ENCODE measurements at regions of chr9 and their contacts with region 1.

Region 1: DNA sequence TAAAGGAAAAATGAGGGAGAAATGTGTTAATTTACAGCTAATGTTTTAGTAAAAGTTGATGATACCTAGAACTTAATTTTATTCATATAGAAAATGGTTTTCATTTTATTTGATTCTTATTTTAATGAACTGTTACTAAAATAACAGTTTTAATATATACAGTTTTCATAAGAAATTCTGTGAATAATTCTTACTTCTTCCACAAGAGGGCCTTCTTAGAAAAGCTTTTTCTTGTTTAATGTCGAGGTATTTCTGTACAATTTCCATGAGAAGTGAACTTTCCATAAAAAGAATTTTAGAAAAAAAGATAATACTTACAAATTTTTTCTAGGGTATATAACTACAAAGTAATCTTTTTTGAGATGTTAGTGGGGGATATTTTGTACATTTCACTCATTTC is 73.9 kb downstream of the KLF9 start:
- DNase-seq: no peak
- ATAC-seq: no peak
- H3K4me3 Mint-ChIP-seq: no peak overlapping the region
- H3K27ac Mint-ChIP-seq: no peak overlapping the region
- H3K4me1 Mint-ChIP-seq: no peaks in the 10 kb centered on the region
- H3K27me3 Mint-ChIP-seq: no peaks in the 10 kb centered on the region
- CTCF ChIP-seq: no peak

Region 2: DNA sequence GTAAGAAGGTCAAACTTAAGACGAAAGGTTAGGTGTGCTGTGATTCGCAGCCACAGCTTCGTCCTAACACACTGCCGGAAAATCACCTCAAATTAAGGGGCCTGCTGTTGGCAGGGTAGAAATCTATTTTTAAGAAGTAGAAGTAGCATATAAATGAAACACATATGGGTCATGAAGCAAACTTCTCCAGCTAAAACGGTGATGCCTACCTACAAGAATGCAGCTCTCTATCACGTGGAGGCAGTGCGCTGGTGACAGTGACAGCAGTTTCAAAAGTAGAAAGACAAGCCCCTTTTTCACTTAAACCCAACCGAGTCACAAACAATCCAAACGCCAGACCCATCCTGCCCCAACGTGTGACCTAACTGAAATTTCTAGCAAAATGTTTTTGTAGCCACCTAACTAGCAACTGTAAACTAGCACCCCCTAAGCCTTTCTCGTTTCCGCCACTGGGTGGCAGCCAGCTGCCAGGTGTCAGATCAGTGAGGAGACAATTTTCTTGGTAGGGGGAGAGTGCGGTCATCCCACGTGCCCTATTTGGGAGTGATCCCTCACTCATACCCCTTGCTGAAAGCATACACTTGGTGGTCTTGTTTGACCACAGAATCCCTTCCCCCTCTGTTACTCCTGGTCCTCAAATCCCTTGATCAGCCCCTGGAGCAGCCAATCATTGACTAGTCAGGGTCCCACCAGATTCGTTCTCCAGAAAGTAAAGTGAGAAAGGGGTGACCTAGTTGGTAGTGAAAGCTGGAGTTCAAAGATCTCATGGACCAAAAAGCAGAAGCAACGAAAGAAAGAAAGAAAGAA is 368.7 kb before region 1 on chr9:
- CTCF ChIA-PET with region 1: no interaction called
- POLR2A ChIA-PET with region 1: no interaction called
- intact Hi-C with region 1: loop called (anchors 1 kb)
- DNase-seq: peak; percentile 17
- ATAC-seq: no peak
- H3K4me3 Mint-ChIP-seq: no peak overlapping the region
- H3K27ac Mint-ChIP-seq: no peak overlapping the region
- H3K4me1 Mint-ChIP-seq: no peaks in the 10 kb centered on the region
- H3K27me3 Mint-ChIP-seq: peaks cover 16% of the 10 kb centered on the region
- CTCF ChIP-seq: no peak

Measured in activated B cell treated with CpG ODN at 0.5 μM for 24 hours (primary cell).